ENCODE measurements at regions of chr20 and their contacts with region 1.

Region 1: DNA sequence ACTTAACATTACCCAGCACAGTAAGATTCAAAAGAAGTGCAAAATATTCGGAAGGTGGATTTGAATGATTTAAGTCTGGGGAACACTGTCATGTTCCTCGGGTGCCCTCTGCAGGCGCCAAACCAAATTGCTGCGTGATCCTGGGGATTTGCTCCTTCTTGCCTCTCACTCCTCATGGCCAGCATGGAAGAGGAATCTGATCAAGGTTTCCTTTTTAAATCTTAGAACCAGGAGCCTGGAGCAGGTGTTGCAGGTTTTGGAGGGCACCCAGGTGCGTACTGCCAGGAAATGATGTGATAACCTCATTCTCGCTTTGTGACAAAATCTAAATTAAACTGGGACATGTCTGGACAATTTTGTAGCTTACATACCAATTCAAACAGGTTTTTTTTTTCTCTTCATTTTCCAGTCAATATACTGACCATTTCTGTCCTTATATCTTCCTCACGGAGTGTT is 8.1 kb upstream of the PFDN4 start:
- DNase-seq: peak; percentile 70 to 91
- H3K4me3 ChIP-seq: no peak overlapping the region
- H3K27ac ChIP-seq: no peak overlapping the region
- H3K4me1 ChIP-seq: peaks cover 0 to 4% (median 2%) of the 10 kb centered on the region in 4 experiments; a peak in 2 of 7 replicates
- H3K27me3 ChIP-seq: no peaks in the 10 kb centered on the region
- CTCF ChIP-seq: peak; percentile 85 to 89 (median 86)
- EP300 ChIP-seq: no peak
- POLR2A ChIP-seq: no peak
- RAD21 ChIP-seq: peak; percentile 94 to 97

Region 2: GRCh38 chr20:54188132-54188849 is 11.5 kb before region 1 on chr20:
- CTCF ChIA-PET with region 1: interaction called, 22 read pairs
- POLR2A ChIA-PET with region 1: no interaction called
- DNase-seq: no peak
- H3K4me3 ChIP-seq: no peak overlapping the region
- H3K27ac ChIP-seq: no peak overlapping the region
- H3K4me1 ChIP-seq: no peaks in the 10 kb centered on the region
- H3K27me3 ChIP-seq: no peaks in the 10 kb centered on the region
- CTCF ChIP-seq: no peak
- EP300 ChIP-seq: no peak
- POLR2A ChIP-seq: no peak
- RAD21 ChIP-seq: no peak

Region 3: GRCh38 chr20:54214566-54214965 is 14.8 kb after region 1 on chr20:
- CTCF ChIA-PET with region 1: interaction called, 15 read pairs
- POLR2A ChIA-PET with region 1: no interaction called
- DNase-seq: no peak
- H3K4me3 ChIP-seq: no peak overlapping the region
- H3K27ac ChIP-seq: no peak overlapping the region
- H3K4me1 ChIP-seq: no peaks in the 10 kb centered on the region; a peak in 1 of 7 replicates
- H3K27me3 ChIP-seq: no peaks in the 10 kb centered on the region
- CTCF ChIP-seq: no peak
- EP300 ChIP-seq: no peak
- POLR2A ChIP-seq: no peak
- RAD21 ChIP-seq: no peak